PC-3 (cell line): ENCODE measurements at regions of chr3 and their contacts with region 1.

Region 1: DNA sequence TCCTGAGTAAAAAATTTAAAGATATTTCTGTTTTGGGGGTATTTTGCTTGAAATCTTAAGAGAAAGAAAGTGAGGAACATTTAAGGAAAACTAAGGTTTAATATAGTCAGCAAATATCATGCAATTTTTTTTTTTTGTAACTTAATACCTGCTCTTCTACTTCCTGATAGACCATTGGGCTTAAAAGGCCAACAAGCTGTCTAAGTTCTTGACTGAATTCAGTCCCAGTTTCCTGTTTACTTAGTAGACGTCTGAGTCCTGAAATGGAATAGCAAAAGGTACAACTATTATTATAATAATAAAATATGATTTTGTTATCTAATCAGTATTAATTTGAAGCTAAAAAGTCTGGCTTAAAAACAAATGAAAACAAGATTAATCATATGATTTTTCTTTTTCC is 37.9 kb downstream of the IQCB1 start:
- DNase-seq: no peak
- ATAC-seq: no peak
- H3K4me3 ChIP-seq: no peak overlapping the region
- H3K27ac ChIP-seq: no peak overlapping the region
- H3K4me1 ChIP-seq: no peaks in the 10 kb centered on the region
- H3K27me3 ChIP-seq: no peaks in the 10 kb centered on the region
- CTCF ChIP-seq: no peak

Region 2: DNA sequence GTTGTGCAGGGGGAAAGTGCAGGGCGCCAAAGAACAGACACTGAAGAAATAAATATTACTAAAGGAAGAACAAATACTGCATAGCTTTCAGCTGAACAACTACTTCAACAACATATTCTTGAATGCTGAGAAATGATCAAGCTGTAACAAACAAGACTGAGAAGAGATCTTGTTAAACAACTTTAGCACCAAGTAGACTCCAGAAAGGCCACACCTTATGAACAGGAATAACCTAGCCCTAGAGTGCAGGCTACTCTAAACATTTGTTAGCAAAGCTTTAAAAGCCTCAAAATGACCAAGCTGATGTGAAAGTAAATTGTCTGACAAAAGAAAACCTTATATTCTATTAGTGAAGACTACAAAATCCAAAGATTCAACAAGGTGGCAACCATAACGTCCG is 334.4 kb before region 1 on chr3:
- CTCF ChIA-PET with region 1: no interaction called
- POLR2A ChIA-PET with region 1: no interaction called
- intact Hi-C with region 1: no loop called
- DNase-seq: no peak
- ATAC-seq: no peak
- H3K4me3 ChIP-seq: no peak overlapping the region
- H3K27ac ChIP-seq: no peak overlapping the region
- H3K4me1 ChIP-seq: peaks cover 5% of the 10 kb centered on the region; the same call in 1 of the 2 replicates
- H3K27me3 ChIP-seq: no peaks in the 10 kb centered on the region
- CTCF ChIP-seq: no peak

Region 3: GRCh38 chr3:121595765-121596406 is 201.1 kb before region 1 on chr3:
- CTCF ChIA-PET with region 1: no interaction called
- POLR2A ChIA-PET with region 1: no interaction called
- intact Hi-C with region 1: no loop called
- DNase-seq: no peak
- ATAC-seq: no peak
- H3K4me3 ChIP-seq: no peak overlapping the region
- H3K27ac ChIP-seq: no peak overlapping the region
- H3K4me1 ChIP-seq: no peaks in the 10 kb centered on the region
- H3K27me3 ChIP-seq: peaks cover 12% of the 10 kb centered on the region
- CTCF ChIP-seq: no peak

Region 4: GRCh38 chr3:121783186-121783585 is 13.8 kb before region 1 on chr3:
- CTCF ChIA-PET with region 1: no interaction called
- POLR2A ChIA-PET with region 1: interaction called, 10 read pairs
- intact Hi-C with region 1: no loop called
- DNase-seq: no peak
- ATAC-seq: no peak
- H3K4me3 ChIP-seq: no peak overlapping the region
- H3K27ac ChIP-seq: no peak overlapping the region
- H3K4me1 ChIP-seq: no peaks in the 10 kb centered on the region
- H3K27me3 ChIP-seq: no peaks in the 10 kb centered on the region
- CTCF ChIP-seq: no peak

Region 5: DNA sequence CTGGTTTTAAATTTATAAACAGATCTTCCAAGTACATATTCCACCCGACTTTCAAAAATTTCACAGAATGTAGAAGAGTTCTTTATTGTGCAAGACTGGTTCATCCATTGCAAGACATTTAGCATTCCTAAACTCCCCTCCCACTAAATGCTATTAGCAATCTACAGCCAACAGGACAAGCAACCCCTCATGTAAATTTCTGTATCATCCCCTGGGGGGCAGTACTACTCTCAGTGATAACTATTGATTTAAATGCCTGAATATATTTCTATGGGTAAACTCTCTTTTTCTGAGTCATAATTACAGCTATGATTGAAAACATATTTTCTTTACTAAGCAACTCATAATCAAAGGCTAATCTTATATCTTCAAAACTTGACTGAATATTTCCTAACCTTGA is 86.5 kb after region 1 on chr3:
- CTCF ChIA-PET with region 1: no interaction called
- POLR2A ChIA-PET with region 1: no interaction called
- intact Hi-C with region 1: no loop called
- DNase-seq: peak; percentile 89
- ATAC-seq: peak; percentile 82
- H3K4me3 ChIP-seq: no peak overlapping the region
- H3K27ac ChIP-seq: no peak overlapping the region
- H3K4me1 ChIP-seq: peaks cover 9% of the 10 kb centered on the region; the same call in 1 of the 2 replicates
- H3K27me3 ChIP-seq: no peaks in the 10 kb centered on the region
- CTCF ChIP-seq: peak; percentile 95